ENCODE measurements at regions of chr11 and their contacts with region 1.

Region 1: DNA sequence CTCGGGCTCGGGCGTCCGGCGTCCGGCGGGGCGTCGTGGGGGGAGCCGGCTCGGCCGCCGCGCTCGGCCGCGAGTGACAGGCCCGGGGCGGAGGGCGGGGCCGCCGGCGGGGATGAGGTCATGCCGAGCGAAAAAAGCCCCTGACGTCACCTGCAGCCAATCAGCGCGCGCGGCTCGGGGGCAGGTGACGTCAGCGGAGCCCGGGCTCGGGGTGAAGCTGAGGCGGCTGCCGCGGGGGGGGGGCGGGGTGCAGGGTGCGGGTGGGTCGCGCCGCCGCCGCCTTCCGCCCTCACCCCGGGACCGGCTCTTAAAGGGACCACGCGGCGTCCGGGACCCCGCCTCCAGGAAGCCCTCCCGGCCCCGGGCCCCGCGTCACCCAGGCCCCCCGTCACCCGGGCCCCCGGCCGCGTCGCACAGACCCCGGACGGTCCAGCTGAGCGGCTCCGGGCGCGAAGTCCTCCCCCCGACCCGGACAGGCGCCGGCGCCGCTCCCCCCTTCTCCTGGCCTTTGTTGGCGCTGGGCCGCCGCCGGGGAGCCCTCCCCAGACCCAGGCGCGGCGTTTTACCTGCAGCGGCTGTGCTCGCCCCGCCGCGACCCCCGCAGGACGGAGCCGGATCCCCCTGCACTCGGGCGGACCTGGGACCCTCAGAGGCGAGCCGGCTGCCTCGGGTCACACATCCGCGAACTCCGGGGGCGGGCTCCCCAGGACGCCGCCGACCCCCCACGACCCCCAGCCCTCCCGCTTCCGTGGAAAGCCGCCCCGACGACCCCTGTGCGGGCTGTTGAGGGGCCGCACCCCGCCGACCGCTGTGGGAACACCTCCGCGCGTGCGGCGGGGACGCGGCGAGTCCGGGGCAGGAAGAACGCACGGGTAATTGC is at the start of gene DUSP8:
- DNase-seq: peak; percentile 94
- CTCF ChIP-seq: no peak

Region 2: GRCh38 chr11:1202776-1203504 is 369.5 kb before region 1 on chr11:
- CTCF ChIA-PET with region 1: interaction called, 14 read pairs
- POLR2A ChIA-PET with region 1: no interaction called
- DNase-seq: peak; percentile 88
- CTCF ChIP-seq: peak; percentile 95

Region 3: GRCh38 chr11:1515082-1516060 is 57.1 kb before region 1 on chr11:
- CTCF ChIA-PET with region 1: interaction called, 11 read pairs
- POLR2A ChIA-PET with region 1: no interaction called
- DNase-seq: peak; percentile 89
- CTCF ChIP-seq: peak; percentile 93

Region 4: GRCh38 chr11:1559119-1559951 is 13.1 kb before region 1 on chr11:
- CTCF ChIA-PET with region 1: interaction called, 26 read pairs
- POLR2A ChIA-PET with region 1: no interaction called
- DNase-seq: no peak
- CTCF ChIP-seq: no peak

Region 5: DNA sequence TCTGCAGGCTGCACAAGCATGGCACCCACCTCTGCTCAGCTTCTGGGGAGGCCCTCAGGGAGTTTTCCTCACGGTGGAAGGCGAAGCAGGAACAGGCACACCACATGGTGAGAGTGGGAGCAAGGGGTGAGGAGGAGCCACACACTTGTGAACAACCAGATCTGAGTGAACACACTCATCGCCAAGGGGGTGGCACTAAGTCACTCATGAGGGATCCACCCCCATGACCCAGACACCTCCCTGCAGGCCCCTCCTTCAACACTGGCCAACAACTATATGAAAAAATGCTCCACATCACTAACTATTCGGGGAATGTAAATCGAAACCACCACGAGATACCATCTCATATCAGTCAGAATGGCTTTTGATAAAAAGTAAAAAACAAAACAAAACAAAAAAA is 26.4 kb after region 1 on chr11:
- CTCF ChIA-PET with region 1: interaction called, 27 read pairs
- POLR2A ChIA-PET with region 1: no interaction called
- DNase-seq: no peak
- CTCF ChIP-seq: no peak

Measured in GM10248 (cell line).